KBM-7 (cell line): ENCODE measurements at regions of chr15 and their contacts with region 1.

Region 1: DNA sequence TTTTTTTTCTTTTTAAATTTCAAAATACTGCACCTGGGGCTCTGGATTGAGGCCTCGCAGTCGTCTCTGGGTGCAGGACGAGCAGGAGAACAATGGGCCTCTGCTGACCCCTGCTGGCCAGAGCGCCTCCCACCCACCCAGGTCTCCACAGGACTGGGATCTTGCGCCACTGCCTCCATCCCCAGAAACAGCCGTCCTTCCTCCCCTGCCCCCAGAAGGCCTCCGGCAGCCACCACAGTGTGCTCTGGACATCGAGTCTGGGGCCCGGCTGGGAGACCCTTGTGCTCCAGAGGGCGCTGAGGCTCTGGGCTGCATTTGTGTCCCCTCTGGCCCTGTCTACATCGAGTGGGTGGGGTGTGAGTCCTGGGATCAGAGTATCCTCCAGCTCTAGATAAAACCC is 6.6 kb upstream of the ACSBG1 start:
- DNase-seq: peak; percentile 95

Region 2: GRCh38 chr15:77959432-77959879 is 281.6 kb before region 1 on chr15:
- in situ Hi-C with region 1: loop called (anchors 25 kb)
- DNase-seq: peak; percentile 94

Region 3: GRCh38 chr15:78325092-78325843 is 84.3 kb after region 1 on chr15:
- in situ Hi-C with region 1: loop called (anchors 25 kb)
- DNase-seq: no peak